ENCODE measurements at regions of chr12 and their contacts with region 1.

Region 1: DNA sequence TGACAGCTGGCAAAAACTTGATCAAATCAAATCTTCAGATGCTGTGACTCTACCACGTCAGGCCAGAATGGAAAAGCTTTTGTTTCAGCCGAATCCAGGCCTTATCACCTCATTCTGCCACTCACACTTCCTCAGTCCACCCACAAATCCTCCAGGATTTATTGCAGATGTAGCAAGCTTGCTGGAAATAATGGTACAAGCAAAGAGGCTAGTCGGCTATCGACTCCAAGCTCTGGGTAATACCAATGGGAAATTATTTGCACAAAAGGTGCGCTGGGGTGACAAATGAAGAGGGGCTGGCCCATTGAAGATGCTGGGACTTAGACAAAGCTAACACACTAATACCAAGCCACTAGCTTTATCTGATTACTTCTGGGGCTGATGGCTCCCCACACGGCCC is 250.5 kb downstream of the ASCL1 start:
- DNase-seq: no peak
- ATAC-seq: no peak
- H3K4me3 ChIP-seq: no peak overlapping the region
- H3K27ac ChIP-seq: no peak overlapping the region
- H3K4me1 ChIP-seq: no peaks in the 10 kb centered on the region
- H3K27me3 ChIP-seq: peaks cover 14% of the 10 kb centered on the region; the same call in 1 of the 2 replicates
- CTCF ChIP-seq: no peak

Region 2: GRCh38 chr12:103175617-103176016 is 32.3 kb before region 1 on chr12:
- CTCF ChIA-PET with region 1: no interaction called
- POLR2A ChIA-PET with region 1: no interaction called
- intact Hi-C with region 1: no loop called
- DNase-seq: no peak
- ATAC-seq: no peak
- H3K4me3 ChIP-seq: no peak overlapping the region
- H3K27ac ChIP-seq: no peak overlapping the region
- H3K4me1 ChIP-seq: no peaks in the 10 kb centered on the region
- H3K27me3 ChIP-seq: 0 out of 2 replicates have a peak, but pooled peaks cover 3% of the 10 kb centered on the region
- CTCF ChIP-seq: no peak

Region 3: DNA sequence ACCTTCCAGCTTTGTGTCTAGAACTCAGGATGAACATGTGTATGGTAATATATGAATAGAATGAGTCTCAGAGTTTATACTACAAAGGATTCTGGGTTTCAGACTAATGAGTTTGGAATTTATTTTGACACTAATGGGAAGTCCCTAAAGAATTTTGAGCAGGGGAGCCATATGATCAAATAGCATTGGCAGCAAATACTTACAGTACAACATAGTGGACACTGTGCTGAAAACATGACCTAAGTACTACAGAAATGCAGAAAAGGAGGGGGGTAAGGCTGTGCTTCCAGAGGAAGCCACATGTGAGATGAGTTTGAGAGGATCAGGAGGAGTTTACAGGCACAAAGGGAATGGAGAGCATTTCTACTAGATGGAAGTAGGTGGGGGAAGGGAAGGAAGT is 62.0 kb after region 1 on chr12:
- CTCF ChIA-PET with region 1: no interaction called
- POLR2A ChIA-PET with region 1: no interaction called
- intact Hi-C with region 1: no loop called
- DNase-seq: no peak
- ATAC-seq: no peak
- H3K4me3 ChIP-seq: no peak overlapping the region
- H3K27ac ChIP-seq: no peak overlapping the region
- H3K4me1 ChIP-seq: no peaks in the 10 kb centered on the region
- H3K27me3 ChIP-seq: peaks cover 13% of the 10 kb centered on the region
- CTCF ChIP-seq: no peak

Region 4: GRCh38 chr12:103392722-103393121 is 184.8 kb after region 1 on chr12:
- CTCF ChIA-PET with region 1: no interaction called
- POLR2A ChIA-PET with region 1: no interaction called
- intact Hi-C with region 1: loop called (anchors 10 kb)
- DNase-seq: no peak
- ATAC-seq: no peak
- H3K4me3 ChIP-seq: no peak overlapping the region
- H3K27ac ChIP-seq: no peak overlapping the region
- H3K4me1 ChIP-seq: peaks cover 8% of the 10 kb centered on the region
- H3K27me3 ChIP-seq: peaks cover 10% of the 10 kb centered on the region; the same call in 1 of the 2 replicates
- CTCF ChIP-seq: no peak

Measured in PC-3 (cell line).